ENCODE measurements at regions of chr22 and their contacts with region 1.

Region 1: GRCh38 chr22:37316875-37317371 is 34.6 kb downstream of the CYTH4 start:
- DNase-seq: peak; percentile 51 to 88 (median 82)
- ATAC-seq: peak; percentile 97
- H3K4me3 ChIP-seq: no peak overlapping the region
- H3K27ac ChIP-seq: no peak overlapping the region
- H3K4me1 ChIP-seq: peaks cover 0 to 34% of the 10 kb centered on the region in 2 donors
- H3K27me3 ChIP-seq: no peaks in the 10 kb centered on the region
- CTCF ChIP-seq: peak; percentile 75 to 93

Region 2: DNA sequence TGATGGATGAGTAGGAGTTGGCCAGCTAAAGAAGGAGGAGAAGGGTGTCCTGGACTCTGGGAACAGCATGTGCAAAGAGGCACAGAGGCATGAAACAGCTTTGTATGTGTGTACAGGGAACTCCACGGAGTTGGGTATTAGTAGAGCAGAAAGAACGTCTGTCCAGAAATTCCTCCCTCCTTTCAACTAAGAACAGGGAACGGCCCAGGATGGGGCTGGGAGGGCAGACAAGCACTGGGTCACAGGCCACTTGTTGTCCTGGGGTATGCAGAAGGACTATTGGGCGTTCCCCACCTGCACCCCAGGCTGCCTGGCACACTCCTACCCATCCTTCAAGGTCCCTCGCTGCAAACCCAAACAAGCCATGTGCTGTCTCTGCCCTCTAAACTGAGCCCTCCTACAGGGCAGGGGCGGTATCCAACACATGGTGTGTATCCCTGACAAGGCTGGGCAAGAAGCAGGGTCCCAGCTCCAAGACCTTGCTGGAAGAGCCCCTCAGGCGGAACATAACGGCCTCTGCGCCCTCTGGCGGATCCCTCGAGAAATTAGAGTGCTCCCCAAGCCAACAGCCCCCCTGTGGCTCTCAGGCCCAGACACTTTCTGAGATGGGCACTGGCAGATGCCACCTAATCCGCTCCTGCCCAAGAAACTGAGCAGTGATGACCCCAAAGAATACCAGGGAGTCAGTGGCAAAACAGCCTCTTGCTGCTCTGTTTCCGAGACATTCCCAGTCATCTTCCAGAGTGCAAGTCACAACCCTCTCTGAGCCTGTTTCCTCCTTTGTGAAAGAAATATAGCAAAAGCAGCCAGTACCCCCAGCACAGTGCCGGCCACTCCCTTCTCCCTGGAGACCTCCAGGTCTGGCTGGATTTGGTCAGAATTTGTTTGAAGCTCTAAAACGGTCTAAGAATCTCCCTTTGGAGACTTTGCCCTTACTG is 112.0 kb after region 1 on chr22:
- intact Hi-C with region 1: loop called in 1 of 2 experiments (anchors 10 kb)
- DNase-seq: peak in 3 of 4 donors; percentile 41 to 83 (median 61)
- ATAC-seq: peak; percentile 34
- H3K4me3 ChIP-seq: no peak overlapping the region
- H3K27ac ChIP-seq: no peak overlapping the region
- H3K4me1 ChIP-seq: peaks cover 0 to 19% of the 10 kb centered on the region in 2 donors
- H3K27me3 ChIP-seq: peaks cover 13 to 89% of the 10 kb centered on the region in 2 donors
- CTCF ChIP-seq: peak; percentile 63 to 67

Region 3: DNA sequence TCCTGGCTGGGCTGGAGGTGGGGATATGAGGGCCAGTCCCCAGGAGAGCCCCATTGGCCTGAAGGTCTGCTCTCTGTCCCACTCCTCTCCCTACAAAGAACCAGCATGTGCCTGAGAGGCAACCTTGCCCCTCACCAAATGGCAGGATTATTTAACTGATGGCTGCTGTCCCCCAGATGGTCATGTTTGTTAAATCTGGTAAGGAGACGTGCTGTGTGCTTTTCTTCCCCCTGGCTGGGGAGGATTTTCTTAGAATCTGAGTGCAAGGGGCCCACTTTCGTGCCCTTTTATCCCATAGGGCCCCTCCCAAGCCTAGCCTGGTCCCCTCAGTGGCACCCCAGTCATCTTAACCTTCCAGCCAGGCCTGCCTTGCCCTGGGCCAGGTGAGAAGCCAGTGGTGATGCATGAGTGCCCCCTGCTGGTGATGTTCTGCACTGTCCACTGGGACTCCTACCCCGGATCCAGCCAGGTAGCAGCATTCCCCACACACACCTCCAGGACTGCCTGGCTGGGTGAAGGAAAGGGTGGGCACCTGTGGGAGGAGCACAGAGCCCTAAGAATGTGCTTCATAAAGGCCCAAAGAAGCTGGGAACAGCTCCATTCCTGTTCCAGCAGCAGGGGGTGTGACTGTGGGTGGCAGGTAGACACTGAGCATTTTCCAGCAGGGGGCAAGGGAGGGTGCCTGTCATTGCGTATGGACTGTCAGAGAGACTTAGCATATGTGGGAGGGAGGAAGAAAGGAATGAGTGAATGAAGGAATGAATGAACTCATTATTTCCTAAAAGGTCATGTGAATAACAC is 140.4 kb after region 1 on chr22:
- intact Hi-C with region 1: loop called in 1 of 2 experiments (anchors 10 kb)
- DNase-seq: peak; percentile 27 to 91 (median 71)
- ATAC-seq: peak; percentile 84
- H3K4me3 ChIP-seq: no peak overlapping the region
- H3K27ac ChIP-seq: no peak overlapping the region
- H3K4me1 ChIP-seq: peaks cover 0 to 5% of the 10 kb centered on the region in 2 donors
- H3K27me3 ChIP-seq: peaks cover 0 to 23% of the 10 kb centered on the region in 2 donors
- CTCF ChIP-seq: peak; percentile 82 to 93

Region 4: DNA sequence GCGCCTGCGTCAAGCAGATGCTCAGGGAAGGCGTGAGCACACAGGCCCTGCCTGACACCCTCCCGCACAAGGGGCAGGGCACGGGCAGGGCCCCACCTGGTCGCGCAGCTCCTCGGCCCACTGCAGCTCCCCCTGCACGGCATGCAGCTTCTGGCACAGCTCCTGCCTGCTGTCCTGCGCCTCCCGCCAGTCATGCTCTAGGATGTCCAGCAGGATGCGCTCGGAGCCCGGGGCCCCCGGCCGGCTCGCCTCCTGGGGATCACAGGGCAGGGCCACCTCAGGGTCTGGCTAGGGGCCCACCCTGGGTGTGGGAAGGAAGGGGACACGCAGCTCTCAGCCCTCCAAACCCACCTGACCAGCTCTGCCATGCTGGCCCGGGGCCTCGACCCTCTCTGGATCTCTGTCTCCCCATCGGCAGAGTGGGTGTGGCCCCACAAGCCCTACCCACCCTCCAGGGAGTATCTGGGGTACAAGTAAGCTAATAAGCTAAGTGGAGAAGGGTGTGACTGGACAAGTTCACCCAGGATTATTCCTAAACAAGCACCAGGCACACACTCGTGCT is 191.6 kb after region 1 on chr22:
- intact Hi-C with region 1: no loop called
- DNase-seq: no peak
- ATAC-seq: peak; percentile 43
- H3K4me3 ChIP-seq: no peak overlapping the region
- H3K27ac ChIP-seq: peak overlapping the region; percentile 33 to 68
- H3K4me1 ChIP-seq: peaks cover 14 to 32% of the 10 kb centered on the region in 2 donors
- H3K27me3 ChIP-seq: no peaks in the 10 kb centered on the region
- CTCF ChIP-seq: no peak

Measured in left lung (tissue), 14 donors.